CD14-positive monocyte (primary cell): ENCODE measurements at regions of chr9 and their contacts with region 1.

Region 1: GRCh38 chr9:119998614-119999013 is 581.4 kb downstream of the CDK5RAP2 start:
- DNase-seq: no peak
- H3K4me3 ChIP-seq: no peak overlapping the region
- H3K4me3 Mint-ChIP-seq: no peak overlapping the region
- H3K27ac ChIP-seq: no peak overlapping the region
- H3K27ac Mint-ChIP-seq: peak overlapping the region in 1 of 7 donors; percentile 10
- H3K4me1 ChIP-seq: no peaks in the 10 kb centered on the region
- H3K4me1 Mint-ChIP-seq: no peaks in the 10 kb centered on the region
- H3K27me3 ChIP-seq: no peaks in the 10 kb centered on the region
- H3K27me3 Mint-ChIP-seq: peaks cover 0 to 2% (median 1%) of the 10 kb centered on the region in 3 donors
- CTCF ChIP-seq: no peak

Region 2: DNA sequence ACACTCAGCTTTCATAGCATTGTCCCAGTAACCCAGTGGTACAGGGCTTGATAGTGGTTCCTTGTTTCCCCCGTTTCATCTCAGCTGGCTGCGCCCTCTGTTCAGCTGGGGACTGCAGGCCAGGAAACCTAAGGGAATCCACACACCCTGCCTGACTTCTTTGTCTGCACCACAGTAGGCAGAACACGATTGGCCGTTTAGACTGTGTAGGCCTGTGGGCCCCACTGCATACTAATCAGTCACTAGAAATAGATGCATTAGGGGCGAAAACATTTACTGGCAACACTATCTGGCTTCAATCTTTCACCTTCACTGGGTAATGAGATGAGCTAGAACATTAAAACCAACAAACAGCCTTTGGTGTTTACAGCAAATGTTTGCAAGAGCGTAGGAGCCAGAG is 116.7 kb before region 1 on chr9:
- intact Hi-C with region 1: no loop called
- DNase-seq: no peak
- H3K4me3 ChIP-seq: no peak overlapping the region
- H3K4me3 Mint-ChIP-seq: no peak overlapping the region
- H3K27ac ChIP-seq: no peak overlapping the region
- H3K27ac Mint-ChIP-seq: no peak overlapping the region
- H3K4me1 ChIP-seq: no peaks in the 10 kb centered on the region
- H3K4me1 Mint-ChIP-seq: no peaks in the 10 kb centered on the region
- H3K27me3 ChIP-seq: no peaks in the 10 kb centered on the region
- H3K27me3 Mint-ChIP-seq: no peaks in the 10 kb centered on the region
- CTCF ChIP-seq: no peak

Region 3: DNA sequence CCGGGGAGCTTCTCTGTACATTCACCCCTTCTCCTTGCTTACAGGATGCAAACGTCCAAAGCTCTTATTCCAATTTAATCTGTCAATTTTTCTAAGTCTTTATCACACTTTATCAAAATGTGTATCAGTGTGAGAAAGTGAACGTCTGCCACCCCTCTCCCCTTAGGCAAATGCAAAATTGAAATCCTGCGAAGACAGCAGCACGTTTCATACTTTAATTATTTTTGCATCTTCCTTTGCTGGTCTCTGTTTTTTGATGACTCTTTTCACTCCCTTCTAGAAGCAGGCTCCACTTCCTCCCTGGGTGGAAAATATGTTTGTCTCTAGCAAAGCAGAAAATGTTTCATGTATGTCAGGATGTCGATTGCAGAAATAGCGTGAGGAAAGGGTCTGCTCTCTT is 52.9 kb before region 1 on chr9:
- intact Hi-C with region 1: loop called in 1 of 2 experiments (anchors 5 kb)
- DNase-seq: no peak
- H3K4me3 ChIP-seq: no peak overlapping the region
- H3K4me3 Mint-ChIP-seq: no peak overlapping the region
- H3K27ac ChIP-seq: no peak overlapping the region
- H3K27ac Mint-ChIP-seq: no peak overlapping the region
- H3K4me1 ChIP-seq: no peaks in the 10 kb centered on the region
- H3K4me1 Mint-ChIP-seq: no peaks in the 10 kb centered on the region
- H3K27me3 ChIP-seq: no peaks in the 10 kb centered on the region
- H3K27me3 Mint-ChIP-seq: peaks cover 0 to 3% (median 2%) of the 10 kb centered on the region in 3 donors
- CTCF ChIP-seq: no peak